ENCODE measurements at regions of chr1 and their contacts with region 1.

Region 1: GRCh38 chr1:46477153-46477929 is 12.3 kb upstream of the DMBX1 start:
- DNase-seq: peak; percentile 83
- H3K4me3 Mint-ChIP-seq: no peak overlapping the region
- H3K27ac Mint-ChIP-seq: no peak overlapping the region
- H3K4me1 Mint-ChIP-seq: no peaks in the 10 kb centered on the region
- H3K27me3 Mint-ChIP-seq: no peaks in the 10 kb centered on the region
- CTCF ChIP-seq: peak; percentile 97

Region 2: DNA sequence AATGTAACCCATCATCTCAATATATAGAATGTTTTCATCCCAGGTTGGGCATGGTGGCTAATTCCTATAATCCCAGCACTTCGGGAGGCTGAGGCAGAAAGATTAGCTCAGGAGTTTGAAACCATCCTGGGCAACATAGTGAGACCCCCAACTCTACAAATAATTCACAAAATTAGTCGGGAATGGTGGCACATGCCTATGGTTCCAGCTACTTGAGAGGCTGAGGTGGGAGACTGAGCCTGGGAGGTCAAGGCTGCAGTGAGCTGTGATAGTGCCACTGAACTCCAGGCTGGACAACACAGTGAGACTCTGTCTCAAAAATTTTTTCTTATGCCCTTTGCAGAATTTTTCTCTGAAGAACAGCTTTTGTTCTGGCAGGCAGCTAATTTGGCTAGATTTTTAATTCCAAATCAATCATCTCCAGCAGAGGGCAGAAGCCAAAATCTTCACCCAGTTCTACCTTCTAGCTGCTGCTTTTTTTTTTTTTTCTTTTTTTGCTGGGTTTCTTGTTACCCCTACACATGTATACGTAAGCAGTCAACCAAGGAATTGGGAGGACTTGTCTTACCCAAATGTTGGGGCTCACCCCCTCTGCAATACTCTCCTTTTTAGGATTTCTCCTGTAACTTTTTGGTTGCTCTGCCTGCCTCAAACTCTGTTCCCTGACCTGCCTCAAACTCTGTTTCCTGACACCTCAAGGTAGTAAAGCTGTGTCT is 232.5 kb before region 1 on chr1:
- CTCF ChIA-PET with region 1: no interaction called
- POLR2A ChIA-PET with region 1: no interaction called
- intact Hi-C with region 1: no loop called
- DNase-seq: peak; percentile 38
- H3K4me3 Mint-ChIP-seq: no peak overlapping the region
- H3K27ac Mint-ChIP-seq: no peak overlapping the region
- H3K4me1 Mint-ChIP-seq: peaks cover 23% of the 10 kb centered on the region
- H3K27me3 Mint-ChIP-seq: no peaks in the 10 kb centered on the region
- CTCF ChIP-seq: peak; percentile 42

Region 3: GRCh38 chr1:46408356-46409062 is 68.8 kb before region 1 on chr1:
- CTCF ChIA-PET with region 1: interaction called, 10 read pairs
- POLR2A ChIA-PET with region 1: no interaction called
- intact Hi-C with region 1: no loop called
- DNase-seq: no peak
- H3K4me3 Mint-ChIP-seq: no peak overlapping the region
- H3K27ac Mint-ChIP-seq: no peak overlapping the region
- H3K4me1 Mint-ChIP-seq: peaks cover 3% of the 10 kb centered on the region
- H3K27me3 Mint-ChIP-seq: no peaks in the 10 kb centered on the region
- CTCF ChIP-seq: no peak

Region 4: GRCh38 chr1:46448109-46448911 is 29.0 kb before region 1 on chr1:
- CTCF ChIA-PET with region 1: interaction called, 10 read pairs
- POLR2A ChIA-PET with region 1: no interaction called
- intact Hi-C with region 1: loop called (anchors 2 kb)
- DNase-seq: no peak
- H3K4me3 Mint-ChIP-seq: no peak overlapping the region
- H3K27ac Mint-ChIP-seq: no peak overlapping the region
- H3K4me1 Mint-ChIP-seq: peaks cover 3% of the 10 kb centered on the region
- H3K27me3 Mint-ChIP-seq: peaks cover 20% of the 10 kb centered on the region
- CTCF ChIP-seq: no peak

Region 5: DNA sequence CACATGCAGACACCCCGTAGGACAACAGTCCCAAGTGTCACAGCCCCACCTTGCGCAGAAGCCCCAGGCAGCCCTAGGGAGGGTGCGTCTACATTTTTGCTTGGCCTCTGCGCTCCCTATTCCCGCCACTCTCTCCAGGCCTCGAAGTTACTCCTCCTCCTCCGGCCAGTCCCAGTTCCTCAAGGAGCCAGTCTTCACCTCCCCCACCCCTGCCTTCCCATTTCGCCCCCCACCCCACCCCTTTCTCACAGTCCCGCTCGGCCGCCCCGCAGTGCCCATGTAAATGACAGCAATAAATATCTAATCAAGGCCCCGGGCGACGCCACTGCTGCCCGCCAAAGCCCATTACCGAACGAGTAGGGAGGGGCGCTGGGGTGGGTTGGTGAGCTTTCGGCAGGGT is 15.5 kb after region 1 on chr1:
- CTCF ChIA-PET with region 1: interaction called, 23 read pairs
- POLR2A ChIA-PET with region 1: no interaction called
- intact Hi-C with region 1: no loop called
- DNase-seq: no peak
- H3K4me3 Mint-ChIP-seq: no peak overlapping the region
- H3K27ac Mint-ChIP-seq: no peak overlapping the region
- H3K4me1 Mint-ChIP-seq: peaks cover 12% of the 10 kb centered on the region
- H3K27me3 Mint-ChIP-seq: peaks cover 62% of the 10 kb centered on the region
- CTCF ChIP-seq: no peak

Region 6: DNA sequence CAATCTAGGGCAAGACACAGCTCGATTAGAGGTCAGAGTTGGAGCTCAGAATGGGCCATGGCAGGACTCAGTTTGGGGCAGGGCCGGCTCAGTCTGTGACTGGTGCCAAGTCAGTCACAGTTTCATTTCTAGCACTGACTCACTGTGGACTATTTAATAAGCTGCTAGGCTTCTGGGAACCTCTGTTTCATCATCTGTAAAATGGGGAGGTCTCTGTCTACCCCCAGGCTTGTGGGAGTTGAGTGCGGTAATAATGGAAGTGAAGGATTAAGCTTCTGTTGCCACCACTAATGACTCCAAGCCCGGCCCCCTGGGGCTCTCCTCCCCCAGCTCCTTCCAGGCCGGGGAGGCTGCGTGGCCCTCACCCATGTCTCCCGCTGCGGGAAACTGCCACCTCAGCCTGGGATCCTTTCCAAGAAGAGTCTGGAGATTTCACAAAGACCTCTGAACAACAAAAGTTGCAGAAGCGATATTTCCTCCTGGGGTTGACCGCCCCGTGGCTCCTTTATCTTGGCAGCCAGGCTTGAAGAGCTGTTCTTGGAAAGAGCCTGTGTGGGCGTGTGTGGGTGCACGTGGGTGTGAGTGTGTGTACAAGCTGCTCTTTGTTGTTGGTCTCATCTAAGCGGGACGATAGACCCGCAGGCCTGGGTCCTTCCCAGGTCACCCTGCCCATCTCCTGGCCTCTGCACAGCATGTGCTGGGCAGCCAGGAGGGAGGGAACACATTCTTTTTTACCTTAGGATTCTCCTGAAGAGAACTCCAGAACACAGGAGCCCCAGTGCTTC is 45.0 kb after region 1 on chr1:
- CTCF ChIA-PET with region 1: interaction called, 223 read pairs
- POLR2A ChIA-PET with region 1: interaction called, 4 read pairs
- intact Hi-C with region 1: no loop called
- DNase-seq: peak; percentile 96
- H3K4me3 Mint-ChIP-seq: peak overlapping the region; percentile 46
- H3K27ac Mint-ChIP-seq: peak overlapping the region; percentile 88
- H3K4me1 Mint-ChIP-seq: peaks cover 42% of the 10 kb centered on the region
- H3K27me3 Mint-ChIP-seq: no peaks in the 10 kb centered on the region
- CTCF ChIP-seq: no peak

Region 7: DNA sequence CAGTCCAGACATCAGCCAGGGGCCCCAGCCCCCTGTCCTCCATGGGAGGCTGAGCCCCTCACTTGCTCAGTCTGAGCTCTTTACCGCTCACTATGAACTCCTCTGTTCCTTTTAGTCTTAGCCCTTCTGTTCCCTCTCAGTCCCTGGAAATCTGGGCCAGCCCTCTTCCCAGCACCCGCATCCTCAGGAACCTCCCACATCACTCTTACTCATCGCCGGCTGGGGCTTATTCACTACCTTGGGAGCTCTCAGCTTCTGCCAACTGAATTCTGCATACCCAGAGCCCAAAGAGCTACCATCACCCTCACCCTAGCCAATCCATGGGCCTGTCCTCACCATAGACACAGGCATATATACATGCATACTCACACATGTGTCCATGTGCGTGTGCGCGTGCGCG is 62.6 kb after region 1 on chr1:
- CTCF ChIA-PET with region 1: interaction called, 21 read pairs
- POLR2A ChIA-PET with region 1: interaction called, 3 read pairs
- intact Hi-C with region 1: no loop called
- DNase-seq: peak; percentile 77
- H3K4me3 Mint-ChIP-seq: no peak overlapping the region
- H3K27ac Mint-ChIP-seq: no peak overlapping the region
- H3K4me1 Mint-ChIP-seq: peaks cover 18% of the 10 kb centered on the region
- H3K27me3 Mint-ChIP-seq: peaks cover 50% of the 10 kb centered on the region
- CTCF ChIP-seq: no peak

Region 8: GRCh38 chr1:46983830-46984586 is 506.7 kb after region 1 on chr1:
- CTCF ChIA-PET with region 1: no interaction called
- POLR2A ChIA-PET with region 1: no interaction called
- intact Hi-C with region 1: no loop called
- DNase-seq: no peak
- H3K4me3 Mint-ChIP-seq: no peak overlapping the region
- H3K27ac Mint-ChIP-seq: no peak overlapping the region
- H3K4me1 Mint-ChIP-seq: no peaks in the 10 kb centered on the region
- H3K27me3 Mint-ChIP-seq: peaks cover 17% of the 10 kb centered on the region
- CTCF ChIP-seq: no peak